Aorta (tissue), 5 donors: ENCODE measurements at regions of chr13 and their contacts with region 1.

Region 1: GRCh38 chr13:29508130-29508875 is 87.2 kb downstream of the SLC7A1 start:
- DNase-seq: peak; percentile 87 to 94
- ATAC-seq: peak; percentile 87
- H3K4me3 ChIP-seq: no peak overlapping the region
- H3K27ac ChIP-seq: no peak overlapping the region
- H3K4me1 ChIP-seq: no peaks in the 10 kb centered on the region
- H3K27me3 ChIP-seq: no peaks in the 10 kb centered on the region

Region 2: DNA sequence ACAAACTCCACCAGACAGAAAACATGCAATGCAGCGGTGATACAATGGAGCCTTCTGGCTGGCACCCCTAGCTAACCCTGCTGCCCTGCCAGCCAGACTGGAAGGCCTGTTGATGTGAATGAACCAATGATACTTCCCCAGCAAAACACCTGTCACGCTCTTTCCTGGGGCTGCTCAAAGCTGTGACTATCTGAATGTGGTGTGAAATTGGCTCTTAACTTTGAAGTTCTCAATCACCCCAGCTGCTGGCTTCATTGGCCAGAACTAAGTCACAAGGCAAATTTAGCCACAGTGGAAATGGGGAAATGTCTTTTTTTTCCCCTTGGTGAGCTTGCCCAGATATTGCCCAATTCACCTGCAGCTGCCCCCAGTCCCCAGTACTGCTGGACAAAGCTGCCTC is 60.1 kb before region 1 on chr13:
- intact Hi-C with region 1: no loop called
- DNase-seq: no peak
- ATAC-seq: no peak
- H3K4me3 ChIP-seq: no peak overlapping the region
- H3K27ac ChIP-seq: no peak overlapping the region
- H3K4me1 ChIP-seq: no peaks in the 10 kb centered on the region
- H3K27me3 ChIP-seq: no peaks in the 10 kb centered on the region

Region 3: DNA sequence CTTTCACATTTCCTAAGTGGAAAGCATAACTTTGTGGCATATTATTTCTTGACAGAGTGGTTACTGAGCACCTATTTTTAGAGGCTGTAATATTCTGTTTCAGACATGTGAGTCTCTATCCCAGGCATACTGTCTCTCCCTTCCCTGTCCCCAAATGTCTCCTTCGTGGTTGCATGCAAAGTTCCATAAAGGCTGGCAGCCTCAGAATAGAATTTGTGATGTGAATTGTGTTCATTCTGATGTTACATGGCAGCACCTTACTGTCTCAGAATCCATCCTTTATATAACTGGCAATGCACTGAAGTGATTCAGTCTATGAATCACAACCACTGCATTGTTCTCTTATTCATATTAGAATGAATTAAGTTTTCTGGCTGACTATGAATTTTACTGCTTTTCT is 176.1 kb after region 1 on chr13:
- intact Hi-C with region 1: no loop called
- DNase-seq: no peak
- ATAC-seq: no peak
- H3K4me3 ChIP-seq: no peak overlapping the region
- H3K27ac ChIP-seq: no peak overlapping the region
- H3K4me1 ChIP-seq: no peaks in the 10 kb centered on the region
- H3K27me3 ChIP-seq: no peaks in the 10 kb centered on the region

Region 4: GRCh38 chr13:29698106-29698505 is 189.8 kb after region 1 on chr13:
- intact Hi-C with region 1: loop called in 1 of 2 experiments (anchors 5 kb)
- DNase-seq: no peak
- ATAC-seq: no peak
- H3K4me3 ChIP-seq: no peak overlapping the region
- H3K27ac ChIP-seq: no peak overlapping the region
- H3K4me1 ChIP-seq: no peaks in the 10 kb centered on the region
- H3K27me3 ChIP-seq: no peaks in the 10 kb centered on the region

Region 5: DNA sequence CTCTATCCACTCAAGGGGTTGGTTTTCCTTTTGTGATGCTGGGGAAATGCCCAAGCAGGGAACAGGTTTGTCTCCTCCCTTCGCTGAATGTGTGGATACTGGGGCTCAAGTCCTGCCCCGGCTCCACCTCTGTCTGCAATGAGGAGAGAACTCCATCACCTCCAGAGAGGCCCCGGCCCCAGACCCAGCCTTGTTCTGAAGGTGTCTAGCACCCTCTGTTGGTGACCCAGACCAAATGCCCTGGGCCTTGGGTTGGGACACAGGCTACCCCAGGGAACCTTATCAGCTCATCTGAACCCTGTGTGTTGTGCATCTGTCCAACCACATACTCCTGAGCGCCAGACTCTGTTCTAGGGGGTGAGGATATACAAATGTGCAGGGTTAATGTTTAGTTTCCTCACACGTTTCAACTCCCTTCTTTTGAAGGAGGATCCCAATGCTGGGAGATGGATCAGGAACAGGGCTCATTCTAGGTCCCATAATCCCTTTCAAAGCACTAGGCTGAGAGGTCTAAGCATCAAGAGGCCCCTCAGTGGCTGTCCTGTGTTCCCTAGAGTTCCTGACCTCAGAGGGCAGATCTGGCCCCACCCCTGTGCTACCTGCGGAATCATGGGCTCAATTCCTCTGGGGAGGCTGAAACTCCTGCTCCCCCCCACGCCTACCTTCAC is 199.7 kb after region 1 on chr13:
- intact Hi-C with region 1: loop called in 1 of 2 experiments (anchors 2 kb)
- DNase-seq: peak in 1 of 2 donors; percentile 79
- ATAC-seq: no peak
- H3K4me3 ChIP-seq: no peak overlapping the region
- H3K27ac ChIP-seq: no peak overlapping the region
- H3K4me1 ChIP-seq: no peaks in the 10 kb centered on the region
- H3K27me3 ChIP-seq: no peaks in the 10 kb centered on the region